Upper lobe of right lung (tissue), 1 donor: ENCODE measurements at regions of chr7 and their contacts with region 1.

Region 1: GRCh38 chr7:29408841-29409243 is 154.8 kb upstream of the PRR15 start:
- DNase-seq: no peak
- ATAC-seq: peak; percentile 84
- H3K4me3 ChIP-seq: no peak overlapping the region
- H3K27ac ChIP-seq: no peak overlapping the region
- H3K4me1 ChIP-seq: no peaks in the 10 kb centered on the region
- H3K27me3 ChIP-seq: no peaks in the 10 kb centered on the region
- CTCF ChIP-seq: peak; percentile 85

Region 2: DNA sequence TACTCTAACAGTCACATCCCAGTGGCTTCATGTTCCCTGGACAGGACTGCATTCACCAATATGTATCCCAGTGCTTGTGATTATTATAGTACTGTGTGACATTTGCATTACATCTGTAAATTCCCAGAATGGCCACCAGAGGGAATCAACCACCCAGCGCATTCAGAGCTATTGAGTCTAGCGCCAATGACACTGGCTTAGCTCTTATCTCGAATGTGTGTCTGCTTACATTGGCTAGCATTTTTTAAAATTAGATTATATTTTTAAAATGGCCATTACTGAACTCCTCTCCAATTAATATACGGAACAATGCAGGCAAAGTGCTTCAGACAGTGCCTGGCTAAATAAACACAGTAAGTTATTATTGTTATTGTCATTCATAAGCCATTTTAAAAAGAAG is 487.0 kb before region 1 on chr7:
- intact Hi-C with region 1: loop called (anchors 5 kb)
- DNase-seq: no peak
- ATAC-seq: peak; percentile 96
- H3K4me3 ChIP-seq: no peak overlapping the region
- H3K27ac ChIP-seq: no peak overlapping the region
- H3K4me1 ChIP-seq: peaks cover 7% of the 10 kb centered on the region
- H3K27me3 ChIP-seq: no peaks in the 10 kb centered on the region
- CTCF ChIP-seq: peak; percentile 90

Region 3: DNA sequence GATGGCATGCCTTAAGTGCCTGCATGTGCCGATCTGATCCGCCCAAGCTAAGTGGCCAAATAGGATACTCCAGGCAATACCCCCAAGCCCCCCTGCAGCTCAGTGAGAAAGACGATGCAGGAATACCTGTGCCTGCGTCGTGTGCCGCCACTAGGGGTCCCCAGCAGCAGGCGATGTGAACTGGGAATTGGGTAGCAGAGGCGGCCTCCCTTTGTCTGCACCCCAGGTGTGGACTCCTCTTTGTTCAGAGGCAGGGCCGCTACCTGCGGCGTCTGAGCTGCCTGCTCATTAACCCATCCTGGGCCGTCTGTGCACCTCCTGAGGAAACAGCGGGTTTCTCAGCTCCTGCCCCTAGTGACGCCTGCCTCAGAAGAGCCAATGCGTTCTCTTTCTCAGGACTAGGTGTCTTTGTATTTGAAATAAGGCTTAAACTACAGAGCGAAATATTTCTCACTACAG is 219.1 kb before region 1 on chr7:
- intact Hi-C with region 1: loop called (anchors 10 kb)
- DNase-seq: peak; percentile 84
- ATAC-seq: peak; percentile 84
- H3K4me3 ChIP-seq: peak overlapping the region; percentile 6
- H3K27ac ChIP-seq: no peak overlapping the region
- H3K4me1 ChIP-seq: no peaks in the 10 kb centered on the region
- H3K27me3 ChIP-seq: peaks cover 4% of the 10 kb centered on the region
- CTCF ChIP-seq: peak; percentile 82

Region 4: GRCh38 chr7:29345600-29345999 is 63.2 kb before region 1 on chr7:
- intact Hi-C with region 1: no loop called
- DNase-seq: peak; percentile 68
- ATAC-seq: peak; percentile 79
- H3K4me3 ChIP-seq: no peak overlapping the region
- H3K27ac ChIP-seq: no peak overlapping the region
- H3K4me1 ChIP-seq: no peaks in the 10 kb centered on the region
- H3K27me3 ChIP-seq: no peaks in the 10 kb centered on the region
- CTCF ChIP-seq: peak; percentile 46